ENCODE measurements at regions of chr16 and their contacts with region 1.

Region 1: DNA sequence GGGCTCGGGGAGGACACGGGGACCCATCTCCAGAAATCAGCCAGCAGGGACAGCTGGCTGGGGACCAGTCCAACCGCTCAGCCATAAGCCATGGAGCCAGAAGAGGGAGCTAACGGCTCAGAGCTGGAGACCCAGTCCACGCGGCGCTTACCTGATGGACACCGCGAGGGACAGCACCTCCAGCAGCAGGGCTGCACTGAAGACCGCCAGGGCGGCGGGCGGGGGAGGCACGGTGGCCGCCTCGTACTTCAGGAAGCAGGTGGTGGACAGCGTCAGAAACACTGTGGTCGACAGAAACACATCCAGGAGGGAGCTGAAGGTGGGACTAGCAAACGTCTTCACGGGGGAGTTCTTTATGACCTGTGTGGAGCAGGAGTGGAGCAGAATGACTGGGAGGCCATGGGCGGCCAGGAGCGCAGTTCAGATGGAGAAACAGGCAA is 102.6 kb upstream of the CREBBP start:
- DNase-seq: no peak
- H3K4me3 ChIP-seq: no peak overlapping the region
- H3K27ac ChIP-seq: no peak overlapping the region
- H3K4me1 ChIP-seq: peaks cover 3 to 24% (median 19%) of the 10 kb centered on the region in 4 donors
- H3K27me3 ChIP-seq: no peaks in the 10 kb centered on the region
- CTCF ChIP-seq: peak; percentile 61 to 84 (median 72)
- EP300 ChIP-seq: no peak
- POLR2A ChIP-seq: no peak

Region 2: DNA sequence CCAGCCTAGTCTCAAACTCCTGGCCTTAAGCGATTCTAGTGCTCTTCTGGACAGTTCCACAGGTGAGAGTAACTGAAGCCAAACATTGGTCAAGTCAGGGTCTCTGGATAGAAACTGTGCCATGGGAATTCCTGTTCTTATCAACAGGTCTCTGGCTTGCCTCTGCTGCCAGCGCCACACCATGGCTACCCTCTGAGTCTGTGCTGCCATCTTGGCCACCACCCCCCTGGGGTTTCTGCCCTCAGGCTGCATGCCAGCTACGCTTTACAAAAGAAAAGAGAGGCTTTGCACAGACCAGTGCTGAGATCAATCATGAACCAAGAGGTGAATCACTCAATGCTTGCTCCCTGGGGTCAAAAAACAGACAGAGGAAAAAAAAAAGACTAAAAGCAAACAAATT is 78.2 kb before region 1 on chr16:
- intact Hi-C with region 1: no loop called
- DNase-seq: no peak
- H3K4me3 ChIP-seq: no peak overlapping the region
- H3K27ac ChIP-seq: no peak overlapping the region
- H3K4me1 ChIP-seq: no peaks in the 10 kb centered on the region
- H3K27me3 ChIP-seq: no peaks in the 10 kb centered on the region
- CTCF ChIP-seq: no peak
- EP300 ChIP-seq: no peak
- POLR2A ChIP-seq: no peak

Region 3: DNA sequence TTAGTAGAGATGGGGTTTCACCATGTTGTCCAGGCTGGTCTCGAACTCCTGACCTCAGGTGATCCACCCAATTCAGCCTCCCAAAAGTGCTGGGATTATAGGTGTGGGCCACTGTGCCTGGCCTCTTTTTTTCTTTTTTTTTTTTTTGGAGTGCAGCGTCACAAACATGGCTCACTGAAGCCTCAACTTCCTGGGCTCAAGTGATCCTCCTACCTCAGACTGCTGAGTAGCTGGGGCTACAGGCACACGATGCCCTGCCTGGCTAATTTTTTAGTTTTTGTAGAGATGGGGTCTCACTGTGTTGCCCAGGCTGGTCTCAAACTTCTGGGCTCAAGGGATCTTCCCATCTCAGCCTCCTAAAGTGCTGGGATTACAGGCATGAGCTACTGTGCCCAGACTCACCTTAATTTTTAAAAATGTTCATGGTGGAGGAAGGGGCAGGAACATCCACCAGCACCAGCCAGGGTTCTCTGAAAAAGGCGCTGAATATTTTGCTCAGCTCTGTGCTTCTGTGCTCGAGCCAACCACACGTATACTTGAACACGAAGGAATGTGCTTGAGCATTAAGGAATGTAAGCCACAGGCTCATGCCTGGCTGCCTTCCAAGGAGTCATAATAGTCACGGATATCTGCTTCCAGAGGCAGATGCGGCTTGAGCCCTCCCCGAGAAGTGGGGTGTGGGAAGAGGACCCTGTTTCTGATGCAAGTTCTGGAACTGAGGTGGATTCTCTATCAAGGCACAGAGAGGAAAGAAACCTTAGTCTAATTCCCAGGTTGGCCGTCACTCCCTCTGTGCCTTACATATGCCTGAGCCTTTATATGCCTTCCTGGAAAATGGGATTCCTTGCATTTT is 37.1 kb before region 1 on chr16:
- intact Hi-C with region 1: no loop called
- DNase-seq: no peak
- H3K4me3 ChIP-seq: no peak overlapping the region
- H3K27ac ChIP-seq: peak overlapping the region; percentile 60 to 74 (median 70)
- H3K4me1 ChIP-seq: peaks cover 26 to 39% (median 38%) of the 10 kb centered on the region in 4 donors
- H3K27me3 ChIP-seq: no peaks in the 10 kb centered on the region
- CTCF ChIP-seq: no peak
- EP300 ChIP-seq: no peak
- POLR2A ChIP-seq: no peak

Region 4: DNA sequence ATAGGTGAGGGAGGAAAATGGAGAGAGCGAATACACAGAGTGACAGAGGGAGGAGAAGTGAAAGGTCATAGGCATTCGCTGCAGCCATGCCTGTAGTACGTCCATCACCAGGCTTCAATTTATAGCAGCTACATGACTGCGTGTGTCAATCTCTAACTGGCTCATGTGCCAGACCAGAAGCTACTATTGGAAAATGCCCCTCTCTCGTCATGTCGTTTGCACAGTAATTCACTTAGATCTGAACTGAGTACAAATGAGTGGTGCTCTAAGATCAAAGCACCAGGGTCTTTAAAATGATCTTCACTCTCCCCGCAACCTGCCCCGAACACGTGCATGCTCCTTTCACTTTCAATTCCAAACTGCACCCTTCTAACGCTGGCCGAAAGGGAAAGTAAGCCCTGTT is 81.8 kb after region 1 on chr16:
- intact Hi-C with region 1: no loop called
- DNase-seq: no peak
- H3K4me3 ChIP-seq: no peak overlapping the region
- H3K27ac ChIP-seq: no peak overlapping the region
- H3K4me1 ChIP-seq: no peaks in the 10 kb centered on the region
- H3K27me3 ChIP-seq: no peaks in the 10 kb centered on the region
- CTCF ChIP-seq: no peak
- EP300 ChIP-seq: no peak
- POLR2A ChIP-seq: no peak

Region 5: GRCh38 chr16:4183237-4184036 is 200.3 kb after region 1 on chr16:
- intact Hi-C with region 1: loop called (anchors 5 kb)
- DNase-seq: peak; percentile 95
- H3K4me3 ChIP-seq: peak overlapping the region; percentile 68 to 87 (median 73)
- H3K27ac ChIP-seq: peak overlapping the region; percentile 96 to 99 (median 98)
- H3K4me1 ChIP-seq: peaks cover 5 to 23% (median 17%) of the 10 kb centered on the region in 4 donors
- H3K27me3 ChIP-seq: no peaks in the 10 kb centered on the region
- CTCF ChIP-seq: peak; percentile 26 to 42 (median 35)
- EP300 ChIP-seq: no peak
- POLR2A ChIP-seq: peak; percentile 53

Region 6: DNA sequence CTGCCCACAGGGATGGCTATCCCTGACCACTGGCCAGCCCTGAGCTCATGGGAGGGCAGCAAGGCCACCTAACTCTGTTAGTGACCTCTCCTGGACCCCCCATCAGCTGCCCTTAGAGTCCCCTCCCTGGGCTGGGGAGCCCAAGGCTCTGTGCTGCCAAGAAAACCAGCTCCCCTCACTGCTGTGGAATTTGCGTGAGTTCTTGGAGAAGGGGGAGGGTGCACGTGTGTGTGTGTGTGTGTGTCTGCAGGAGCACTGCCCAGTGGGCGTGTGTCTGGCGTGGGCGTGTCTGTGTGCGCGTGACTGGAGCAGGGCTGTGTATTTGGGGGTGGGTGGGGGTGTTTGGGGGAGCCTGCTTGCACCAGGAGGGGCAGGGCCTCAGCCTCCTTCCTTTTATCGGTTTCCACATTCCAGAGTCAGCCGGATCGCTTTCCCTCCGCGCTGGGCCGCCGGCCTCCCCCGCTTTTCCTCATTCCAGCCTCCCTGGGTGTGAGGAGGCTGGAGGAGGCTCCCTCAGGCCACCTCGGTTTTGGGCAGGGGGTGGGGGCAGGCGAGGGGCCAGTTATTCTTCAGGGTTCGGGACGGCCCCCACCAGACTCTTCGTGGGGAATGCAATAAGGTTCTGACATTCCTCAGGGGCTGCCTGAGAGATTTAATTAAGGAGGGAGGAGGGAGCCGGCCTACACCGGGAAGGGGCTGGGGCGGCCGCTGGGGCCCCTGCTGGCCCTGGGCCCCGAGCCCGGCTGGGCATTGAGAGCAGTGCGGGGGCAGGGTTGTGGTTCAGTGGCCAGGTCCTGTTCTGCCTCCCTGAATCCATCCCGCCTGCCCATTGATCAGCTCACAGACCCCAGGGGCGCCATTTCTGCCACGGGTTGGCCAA is 391.0 kb after region 1 on chr16:
- intact Hi-C with region 1: no loop called
- DNase-seq: no peak
- H3K4me3 ChIP-seq: peak overlapping the region; percentile 66 to 75 (median 70)
- H3K27ac ChIP-seq: peak overlapping the region; percentile 82 to 90 (median 84)
- H3K4me1 ChIP-seq: peaks cover 69 to 98% (median 92%) of the 10 kb centered on the region in 4 donors
- H3K27me3 ChIP-seq: no peaks in the 10 kb centered on the region
- CTCF ChIP-seq: no peak
- EP300 ChIP-seq: no peak
- POLR2A ChIP-seq: no peak

Measured in esophagus muscularis mucosa (tissue), 4 donors.